Prostate gland (tissue), 2 donors: ENCODE measurements at regions of chr7 and their contacts with region 1.

Region 1: GRCh38 chr7:144738708-144739314 is 97.0 kb downstream of the TPK1 start:
- DNase-seq: peak; percentile 6
- H3K4me3 ChIP-seq: no peak overlapping the region
- H3K27ac ChIP-seq: no peak overlapping the region
- H3K4me1 ChIP-seq: no peaks in the 10 kb centered on the region
- H3K27me3 ChIP-seq: no peaks in the 10 kb centered on the region
- CTCF ChIP-seq: peak in 3 of 4 experiments; percentile 13 to 61 (median 52)
- POLR2A ChIP-seq: no peak

Region 2: GRCh38 chr7:144545330-144545729 is 193.5 kb before region 1 on chr7:
- intact Hi-C with region 1: no loop called
- DNase-seq: no peak
- H3K4me3 ChIP-seq: no peak overlapping the region
- H3K27ac ChIP-seq: no peak overlapping the region
- H3K4me1 ChIP-seq: no peaks in the 10 kb centered on the region
- H3K27me3 ChIP-seq: no peaks in the 10 kb centered on the region
- CTCF ChIP-seq: no peak
- POLR2A ChIP-seq: no peak

Region 3: DNA sequence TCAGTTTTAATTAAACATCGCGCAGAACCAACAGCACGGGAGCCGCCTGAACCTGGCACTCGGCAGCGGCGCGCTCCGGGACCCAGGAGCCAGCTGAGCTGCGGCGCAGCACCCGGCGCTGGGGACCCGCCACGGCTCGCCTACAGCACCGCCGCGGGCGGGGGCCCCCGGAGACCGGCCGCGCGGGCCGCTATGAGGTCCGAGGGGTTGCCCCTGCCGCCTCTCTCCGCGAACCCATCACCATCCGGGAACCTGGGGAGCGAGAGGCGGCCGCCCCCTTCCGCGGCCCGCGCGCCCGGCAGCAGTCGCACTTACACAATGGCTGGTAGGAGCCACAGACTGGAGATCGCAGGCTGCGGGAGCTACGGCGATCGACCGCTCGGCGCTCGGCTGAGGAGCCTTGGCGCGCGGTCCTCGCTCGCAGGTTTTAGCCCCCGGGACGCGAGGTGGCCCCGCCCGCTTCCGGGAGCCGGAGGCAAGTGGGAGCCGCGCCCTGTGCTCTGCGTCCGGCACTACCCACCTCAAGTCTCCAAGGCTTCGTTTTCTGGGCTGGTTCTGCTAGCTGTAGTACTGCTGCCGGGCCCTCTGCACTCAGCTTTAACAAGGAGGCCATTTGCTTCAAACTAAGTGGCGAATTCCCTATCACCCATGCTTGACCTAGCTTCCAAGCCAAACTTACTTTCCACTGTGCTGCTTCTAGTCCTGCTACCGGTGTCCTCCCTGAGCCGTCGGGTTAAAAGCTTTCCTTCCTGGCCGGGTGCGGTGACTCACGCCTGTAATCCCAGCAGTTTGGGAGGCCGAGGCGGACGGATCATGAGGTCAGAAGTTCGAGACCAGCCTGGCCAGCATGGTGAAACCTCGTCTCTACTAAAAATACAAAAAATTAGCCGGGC is 97.1 kb after region 1 on chr7 and contains the start of gene TPK1:
- intact Hi-C with region 1: loop called (anchors 10 kb)
- DNase-seq: peak; percentile 84
- H3K4me3 ChIP-seq: peak within 1 kb of the TSS; percentile 69 to 79
- H3K27ac ChIP-seq: peak within 1 kb of the TSS; percentile 86 to 93
- H3K4me1 ChIP-seq: no peaks in the 10 kb centered on the region
- H3K27me3 ChIP-seq: no peaks in the 10 kb centered on the region
- CTCF ChIP-seq: peak in 1 of 4 experiments; percentile 23
- POLR2A ChIP-seq: peak; percentile 81
- total RNA-seq, gene TPK1: 4.5 to 5.1 TPM